WTC11 (cell line): ENCODE measurements at regions of chr3 and their contacts with region 1.

Region 1: DNA sequence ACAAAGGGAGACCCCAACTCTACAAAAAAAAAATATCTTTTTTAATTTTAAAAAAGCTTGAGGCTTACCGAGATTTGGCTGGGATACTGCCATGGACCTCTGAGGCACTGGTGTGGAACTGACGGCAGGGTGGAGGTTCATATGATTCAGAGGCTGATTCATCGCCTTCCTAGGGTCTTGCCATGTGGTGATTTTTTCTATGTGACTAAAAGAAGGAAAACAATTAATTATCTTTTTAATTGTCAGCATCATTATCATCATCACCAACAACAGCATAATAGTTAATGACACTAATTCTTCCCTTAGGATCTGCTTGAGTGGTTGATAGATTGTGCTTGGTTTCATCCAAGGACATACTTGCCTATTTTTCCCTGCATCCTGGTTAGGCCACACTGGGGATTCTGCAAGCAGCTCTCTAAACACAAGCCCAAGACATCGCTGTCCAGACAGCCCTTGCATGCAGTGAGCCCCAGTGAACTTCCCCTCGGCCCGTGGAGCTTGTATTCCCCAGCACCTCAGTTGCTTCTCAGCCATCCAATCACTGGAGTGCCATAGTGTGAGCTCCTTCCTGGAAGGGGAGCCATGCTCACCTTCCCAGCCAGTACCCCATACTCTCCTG is 84.9 kb downstream of the WWTR1 start:
- DNase-seq: no peak
- ATAC-seq: no peak
- H3K4me3 Mint-ChIP-seq: no peak overlapping the region
- H3K27ac Mint-ChIP-seq: no peak overlapping the region
- H3K4me1 Mint-ChIP-seq: peaks cover 52% of the 10 kb centered on the region
- H3K27me3 Mint-ChIP-seq: peaks cover 16% of the 10 kb centered on the region
- CTCF ChIP-seq: no peak

Region 2: GRCh38 chr3:149527531-149528339 is 45.2 kb before region 1 on chr3:
- CTCF ChIA-PET with region 1: interaction called, 14 read pairs
- POLR2A ChIA-PET with region 1: no interaction called
- DNase-seq: no peak
- ATAC-seq: peak; percentile 71
- H3K4me3 Mint-ChIP-seq: no peak overlapping the region
- H3K27ac Mint-ChIP-seq: peak overlapping the region; percentile 23; the same call in 1 of the 2 replicates
- H3K4me1 Mint-ChIP-seq: peaks cover 14% of the 10 kb centered on the region
- H3K27me3 Mint-ChIP-seq: no peaks in the 10 kb centered on the region
- CTCF ChIP-seq: no peak

Region 3: DNA sequence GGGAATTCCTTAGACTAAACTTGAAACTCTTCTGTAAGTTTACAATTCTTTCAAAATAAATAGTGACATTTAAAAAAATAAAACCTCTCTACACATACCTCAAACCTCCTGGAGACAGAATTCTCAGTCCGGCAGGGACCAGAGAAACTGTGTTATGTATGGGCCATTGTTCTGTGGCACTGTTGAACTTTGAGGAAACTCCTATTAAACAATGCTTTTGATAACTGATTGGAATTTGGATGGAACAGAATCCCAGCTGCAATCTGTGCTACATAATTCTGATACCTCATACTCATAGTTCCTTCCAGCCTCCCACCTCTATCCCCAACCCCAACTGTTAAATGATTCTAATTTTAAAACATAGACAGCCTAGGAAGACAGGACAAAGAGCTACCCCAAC is 13.4 kb before region 1 on chr3:
- CTCF ChIA-PET with region 1: interaction called, 12 read pairs
- POLR2A ChIA-PET with region 1: no interaction called
- DNase-seq: no peak
- ATAC-seq: no peak
- H3K4me3 Mint-ChIP-seq: no peak overlapping the region
- H3K27ac Mint-ChIP-seq: no peak overlapping the region
- H3K4me1 Mint-ChIP-seq: peaks cover 56% of the 10 kb centered on the region
- H3K27me3 Mint-ChIP-seq: no peaks in the 10 kb centered on the region
- CTCF ChIP-seq: no peak

Region 4: GRCh38 chr3:149621218-149622005 is 48.5 kb after region 1 on chr3:
- CTCF ChIA-PET with region 1: interaction called, 12 read pairs
- POLR2A ChIA-PET with region 1: interaction called, 3 read pairs
- DNase-seq: no peak
- ATAC-seq: no peak
- H3K4me3 Mint-ChIP-seq: no peak overlapping the region
- H3K27ac Mint-ChIP-seq: peak overlapping the region; percentile 85; the same call in 1 of the 2 replicates
- H3K4me1 Mint-ChIP-seq: peaks cover 60% of the 10 kb centered on the region
- H3K27me3 Mint-ChIP-seq: no peaks in the 10 kb centered on the region
- CTCF ChIP-seq: no peak

Region 5: DNA sequence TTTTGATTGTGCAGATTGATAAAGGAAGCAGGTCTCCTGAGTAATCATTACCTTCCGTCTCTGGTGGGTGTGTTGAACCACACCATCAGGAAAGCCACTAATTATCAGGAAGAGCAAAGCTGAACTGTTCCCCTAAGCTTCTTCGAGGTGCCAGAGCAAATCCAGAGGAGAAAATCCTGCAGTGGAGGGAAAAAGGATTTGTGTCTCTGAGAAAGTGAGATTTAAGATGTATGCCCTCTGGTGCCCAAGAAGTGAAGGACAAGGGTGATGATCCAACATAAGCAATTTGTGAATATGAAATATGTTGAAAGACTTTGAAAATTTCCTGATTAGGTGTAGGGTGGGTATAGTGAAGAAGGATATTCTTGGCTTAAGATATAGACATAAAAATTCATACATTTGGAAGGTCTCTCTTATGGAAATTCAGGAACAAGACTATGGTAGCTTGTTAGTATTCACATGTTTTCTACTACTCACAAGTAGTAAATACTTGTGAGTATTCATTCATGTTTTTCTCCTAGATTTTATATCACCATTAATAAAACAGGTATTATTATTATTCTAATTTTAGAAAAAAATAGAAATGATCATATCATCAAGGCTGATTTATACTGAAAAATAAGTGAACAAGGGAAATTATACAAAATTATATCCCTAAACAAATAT is 144.6 kb after region 1 on chr3:
- CTCF ChIA-PET with region 1: interaction called, 62 read pairs
- POLR2A ChIA-PET with region 1: interaction called, 3 read pairs
- DNase-seq: peak; percentile 31
- ATAC-seq: peak; percentile 82
- H3K4me3 Mint-ChIP-seq: no peak overlapping the region
- H3K27ac Mint-ChIP-seq: no peak overlapping the region
- H3K4me1 Mint-ChIP-seq: peaks cover 4% of the 10 kb centered on the region
- H3K27me3 Mint-ChIP-seq: no peaks in the 10 kb centered on the region
- CTCF ChIP-seq: peak; percentile 55

Region 6: DNA sequence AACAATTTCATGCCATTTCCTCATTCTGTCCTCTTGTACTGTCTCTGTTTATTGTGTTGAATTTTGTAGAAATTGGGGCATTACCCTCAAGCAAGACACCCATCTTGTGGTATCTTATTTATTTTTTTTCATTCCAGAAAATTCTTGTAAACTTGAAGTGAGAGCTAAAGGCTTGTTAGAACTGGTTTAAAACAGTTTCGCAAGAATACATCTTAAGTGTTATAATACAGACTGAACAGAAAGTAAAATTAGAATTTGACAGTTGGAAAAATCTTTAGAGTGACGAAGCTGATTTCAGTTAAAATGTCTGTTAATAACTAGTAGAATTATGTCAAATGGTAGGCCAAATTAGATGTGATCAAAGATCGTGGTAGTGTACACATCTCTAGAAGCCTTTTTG is 267.0 kb after region 1 on chr3:
- CTCF ChIA-PET with region 1: no interaction called
- POLR2A ChIA-PET with region 1: no interaction called
- DNase-seq: no peak
- ATAC-seq: no peak
- H3K4me3 Mint-ChIP-seq: no peak overlapping the region
- H3K27ac Mint-ChIP-seq: no peak overlapping the region
- H3K4me1 Mint-ChIP-seq: no peaks in the 10 kb centered on the region
- H3K27me3 Mint-ChIP-seq: no peaks in the 10 kb centered on the region
- CTCF ChIP-seq: no peak